ENCODE measurements at regions of chr19 and their contacts with region 1.

Region 1: DNA sequence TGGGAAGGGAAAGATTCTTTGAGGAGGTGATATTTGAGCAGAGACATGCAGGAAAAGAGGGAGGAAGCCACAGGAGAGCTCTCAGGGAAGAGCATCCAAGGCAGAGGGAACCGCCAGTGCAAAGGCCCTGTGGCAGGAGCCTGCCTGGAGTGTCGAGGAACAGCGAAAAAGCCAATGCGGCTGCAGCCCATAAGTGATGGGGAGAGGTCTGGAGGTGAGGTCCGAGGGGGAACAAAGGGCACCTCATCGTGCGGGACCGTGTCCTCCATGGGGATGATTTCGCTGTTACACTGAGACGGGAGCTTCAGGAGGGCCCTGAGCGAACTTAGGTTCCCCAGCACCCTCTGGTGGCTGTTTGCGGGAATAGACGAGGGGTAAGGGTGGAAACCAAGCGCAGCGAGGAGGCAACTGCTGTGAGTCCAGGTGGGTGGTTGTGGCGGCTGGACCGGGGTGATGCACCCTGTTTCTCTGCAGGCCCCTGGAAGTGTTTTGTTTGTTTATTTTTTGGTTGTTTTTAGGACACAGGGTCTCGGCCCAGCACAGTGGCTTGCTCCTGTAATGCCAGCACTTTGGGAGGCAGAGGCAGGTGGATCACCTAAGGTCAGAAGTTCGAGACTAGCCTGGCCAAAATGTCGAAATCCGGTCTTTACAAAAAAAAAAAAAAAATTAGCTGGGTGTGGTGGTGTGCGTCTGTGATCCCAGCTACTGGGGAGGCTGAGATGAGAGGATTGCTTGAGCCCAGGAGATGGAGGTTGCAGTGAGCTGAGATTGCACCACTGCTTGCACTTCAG is 5.9 kb upstream of the EHD2 start:
- DNase-seq: peak; percentile 71 to 91 (median 83)
- H3K4me3 ChIP-seq: no peak overlapping the region
- H3K27ac ChIP-seq: no peak overlapping the region
- H3K4me1 ChIP-seq: peaks cover 0 to 5% (median 2%) of the 10 kb centered on the region in 4 experiments
- H3K27me3 ChIP-seq: no peaks in the 10 kb centered on the region

Region 2: DNA sequence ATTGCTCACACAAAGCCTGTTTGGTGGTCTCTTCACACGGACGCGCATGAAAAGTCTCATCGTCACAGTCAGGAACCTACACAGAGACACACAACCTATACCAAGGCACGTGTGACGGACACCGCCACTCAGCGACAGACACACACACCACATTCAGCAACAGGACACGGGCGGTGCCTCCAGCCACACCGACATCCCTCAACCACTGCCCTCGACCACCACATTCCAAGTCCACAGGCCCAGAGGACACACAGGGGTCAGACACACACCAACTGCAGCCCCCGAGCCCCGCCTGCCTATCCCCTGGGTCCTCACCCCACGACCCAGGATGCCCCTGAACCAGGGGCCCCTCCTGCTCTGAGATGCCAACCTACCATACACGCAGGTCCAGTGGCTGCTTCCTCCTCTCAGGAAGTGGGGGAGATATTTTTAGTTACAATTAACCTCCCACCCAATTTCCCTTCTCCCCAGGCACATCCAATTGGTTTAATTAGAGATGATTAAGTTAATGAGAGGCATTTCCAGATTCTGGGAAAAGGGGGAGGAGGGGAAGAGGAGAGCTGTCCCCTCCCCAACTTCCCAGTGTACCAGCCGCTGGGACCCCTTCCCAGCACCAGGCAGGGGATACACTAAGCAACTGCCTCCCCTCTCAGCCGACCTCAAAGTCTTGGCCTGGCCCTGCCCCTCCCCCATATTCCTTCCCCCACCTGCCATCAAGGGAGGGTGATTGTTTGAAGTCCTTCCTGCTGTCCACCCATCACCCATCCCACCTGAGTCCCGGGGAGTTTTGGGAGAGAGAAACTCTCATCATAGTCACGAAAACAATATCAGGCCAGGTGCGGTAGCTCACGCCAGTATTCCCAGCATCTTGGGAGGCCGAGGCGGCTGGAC is 308.4 kb before region 1 on chr19:
- CTCF ChIA-PET with region 1: no interaction called
- POLR2A ChIA-PET with region 1: no interaction called
- DNase-seq: no peak
- H3K4me3 ChIP-seq: peak overlapping the region in 1 of 7 experiments; percentile 22
- H3K27ac ChIP-seq: no peak overlapping the region
- H3K4me1 ChIP-seq: peaks cover 0 to 5% (median 1%) of the 10 kb centered on the region in 4 experiments
- H3K27me3 ChIP-seq: peaks cover 0 to 23% (median 4%) of the 10 kb centered on the region in 5 experiments

Region 3: GRCh38 chr19:47652285-47652684 is 55.0 kb before region 1 on chr19:
- CTCF ChIA-PET with region 1: no interaction called
- POLR2A ChIA-PET with region 1: no interaction called
- DNase-seq: no peak
- H3K4me3 ChIP-seq: no peak overlapping the region
- H3K27ac ChIP-seq: no peak overlapping the region
- H3K4me1 ChIP-seq: no peaks in the 10 kb centered on the region
- H3K27me3 ChIP-seq: no peaks in the 10 kb centered on the region

Region 4: GRCh38 chr19:47680858-47681332 is 26.4 kb before region 1 on chr19:
- CTCF ChIA-PET with region 1: no interaction called
- POLR2A ChIA-PET with region 1: no interaction called
- DNase-seq: no peak
- H3K4me3 ChIP-seq: no peak overlapping the region
- H3K27ac ChIP-seq: no peak overlapping the region
- H3K4me1 ChIP-seq: no peaks in the 10 kb centered on the region
- H3K27me3 ChIP-seq: no peaks in the 10 kb centered on the region

Region 5: DNA sequence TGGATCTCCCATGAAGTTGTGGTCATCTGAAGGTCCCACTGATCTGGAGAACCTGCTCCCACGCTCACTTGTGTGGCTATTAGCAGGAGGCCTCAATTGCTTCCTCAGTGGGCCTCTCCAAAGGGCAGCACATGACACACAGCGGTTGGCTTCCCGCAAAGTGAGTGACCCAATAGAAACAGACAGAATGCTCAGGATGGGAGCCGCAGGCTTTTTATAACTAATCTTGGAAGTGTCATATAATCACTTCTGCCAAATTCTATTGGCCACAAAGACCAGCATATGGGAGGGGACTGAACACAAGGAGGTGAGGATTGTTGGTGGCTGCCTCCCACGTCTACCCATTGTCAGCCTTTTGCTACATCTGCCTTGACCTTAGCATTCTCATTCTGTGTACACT is 16.2 kb before region 1 on chr19:
- CTCF ChIA-PET with region 1: interaction called, 10 read pairs
- POLR2A ChIA-PET with region 1: no interaction called
- DNase-seq: no peak
- H3K4me3 ChIP-seq: no peak overlapping the region
- H3K27ac ChIP-seq: no peak overlapping the region
- H3K4me1 ChIP-seq: no peaks in the 10 kb centered on the region
- H3K27me3 ChIP-seq: no peaks in the 10 kb centered on the region

Region 6: GRCh38 chr19:47729992-47730889 is 22.9 kb after region 1 on chr19:
- CTCF ChIA-PET with region 1: interaction called, 321 read pairs
- POLR2A ChIA-PET with region 1: no interaction called
- DNase-seq: peak; percentile 94 to 98 (median 96)
- H3K4me3 ChIP-seq: peak overlapping the region in 6 of 7 experiments; percentile 32 to 73 (median 54)
- H3K27ac ChIP-seq: peak overlapping the region; percentile 72 to 90
- H3K4me1 ChIP-seq: peaks cover 3 to 37% (median 31%) of the 10 kb centered on the region in 4 experiments
- H3K27me3 ChIP-seq: no peaks in the 10 kb centered on the region

Region 7: GRCh38 chr19:47839913-47840312 is 132.6 kb after region 1 on chr19:
- CTCF ChIA-PET with region 1: no interaction called
- POLR2A ChIA-PET with region 1: no interaction called
- DNase-seq: no peak
- H3K4me3 ChIP-seq: no peak overlapping the region
- H3K27ac ChIP-seq: no peak overlapping the region
- H3K4me1 ChIP-seq: peaks cover 0 to 4% (median 0%) of the 10 kb centered on the region in 4 experiments
- H3K27me3 ChIP-seq: peaks cover 0 to 2% (median 0%) of the 10 kb centered on the region in 5 experiments